CD14-positive monocyte (primary cell): ENCODE measurements at regions of chr10 and their contacts with region 1.

Region 1: GRCh38 chr10:132939957-132940790 is 2.2 kb downstream of the CFAP46 start:
- DNase-seq: peak; percentile 44 to 48 (median 44)
- H3K4me3 ChIP-seq: no peak overlapping the region
- H3K4me3 Mint-ChIP-seq: peak overlapping the region in 1 of 2 donors; percentile 78
- H3K27ac ChIP-seq: no peak overlapping the region
- H3K27ac Mint-ChIP-seq: peak overlapping the region in 1 of 7 donors; percentile 68
- H3K4me1 ChIP-seq: peaks cover 0 to 6% of the 10 kb centered on the region in 2 donors
- H3K4me1 Mint-ChIP-seq: peaks cover 5% of the 10 kb centered on the region
- H3K27me3 ChIP-seq: peaks cover 12 to 49% of the 10 kb centered on the region in 2 donors
- H3K27me3 Mint-ChIP-seq: peaks cover 36 to 65% (median 43%) of the 10 kb centered on the region in 3 donors
- CTCF ChIP-seq: peak; percentile 82

Region 2: DNA sequence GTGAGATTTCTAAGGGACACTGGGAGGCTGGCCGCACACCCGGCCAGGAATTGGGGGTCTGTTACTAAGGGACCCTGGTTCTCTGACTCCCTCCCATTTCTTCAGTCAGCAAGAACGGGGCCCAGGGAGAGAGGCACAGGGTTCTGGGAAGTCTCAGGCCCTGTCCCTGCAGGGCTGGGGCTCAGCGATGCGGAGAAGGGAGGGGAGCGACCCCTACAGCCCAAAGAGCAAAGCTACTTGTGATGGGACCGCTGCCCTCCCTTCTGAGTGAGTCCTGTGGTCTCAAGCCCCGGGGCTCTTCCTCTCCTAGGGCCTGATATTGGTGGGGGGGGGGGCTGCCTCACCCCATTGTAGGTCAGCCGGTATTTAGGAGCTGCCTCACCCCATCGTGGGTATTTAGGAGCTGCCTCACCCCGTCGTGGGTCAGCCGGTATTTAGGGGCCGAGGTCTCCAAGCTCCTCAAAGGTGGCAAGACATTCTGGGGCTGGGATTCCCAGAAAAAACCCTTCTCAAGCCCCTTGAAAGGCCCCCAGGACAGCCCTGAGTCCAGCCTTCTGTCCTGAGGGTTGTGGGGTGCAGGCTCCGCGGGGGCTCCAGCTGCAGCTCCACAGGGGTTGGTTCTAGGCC is 137.4 kb before region 1 on chr10:
- intact Hi-C with region 1: no loop called
- DNase-seq: no peak
- H3K4me3 ChIP-seq: no peak overlapping the region
- H3K4me3 Mint-ChIP-seq: no peak overlapping the region
- H3K27ac ChIP-seq: no peak overlapping the region
- H3K27ac Mint-ChIP-seq: no peak overlapping the region
- H3K4me1 ChIP-seq: no peaks in the 10 kb centered on the region
- H3K4me1 Mint-ChIP-seq: no peaks in the 10 kb centered on the region
- H3K27me3 ChIP-seq: no peaks in the 10 kb centered on the region
- H3K27me3 Mint-ChIP-seq: peaks cover 1 to 5% (median 3%) of the 10 kb centered on the region in 3 donors
- CTCF ChIP-seq: no peak

Region 3: DNA sequence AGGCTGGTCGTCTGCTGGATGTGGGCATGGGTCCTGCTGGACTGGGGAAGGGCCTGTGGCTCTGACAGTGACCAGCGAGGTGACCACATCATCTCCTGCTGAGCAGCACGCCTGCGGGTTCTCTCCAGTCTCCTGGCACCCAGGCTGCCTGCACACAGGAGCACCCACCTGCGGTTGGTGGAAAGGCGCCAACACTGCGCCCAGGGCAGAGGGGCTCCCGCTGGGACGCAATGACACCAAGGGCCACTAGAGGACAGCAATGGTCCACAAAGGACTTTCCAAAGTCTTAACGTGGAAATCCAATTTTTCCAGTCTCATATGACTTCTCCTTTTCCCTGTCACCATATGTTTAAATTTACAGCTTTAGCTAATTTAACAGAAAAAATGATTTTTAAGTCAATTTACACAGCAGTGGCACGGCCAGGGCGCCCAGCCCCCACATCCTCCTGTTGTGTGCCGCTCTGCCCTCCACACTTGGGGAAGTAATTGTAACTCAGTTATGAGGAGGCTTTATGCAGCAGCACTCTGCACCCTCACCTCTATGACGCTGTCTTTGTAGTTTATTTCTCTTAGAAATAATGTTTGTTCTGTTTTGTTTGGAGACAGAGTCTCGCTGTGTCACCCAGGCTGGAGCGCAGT is 35.9 kb before region 1 on chr10:
- intact Hi-C with region 1: no loop called
- DNase-seq: peak; percentile 4 to 23 (median 21)
- H3K4me3 ChIP-seq: no peak overlapping the region
- H3K4me3 Mint-ChIP-seq: peak overlapping the region in 1 of 2 donors; percentile 37
- H3K27ac ChIP-seq: no peak overlapping the region
- H3K27ac Mint-ChIP-seq: peak overlapping the region in 1 of 7 donors; percentile 24
- H3K4me1 ChIP-seq: no peaks in the 10 kb centered on the region
- H3K4me1 Mint-ChIP-seq: peaks cover 2% of the 10 kb centered on the region
- H3K27me3 ChIP-seq: no peaks in the 10 kb centered on the region
- H3K27me3 Mint-ChIP-seq: peaks cover 2 to 17% (median 6%) of the 10 kb centered on the region in 3 donors
- CTCF ChIP-seq: peak; percentile 89

Region 4: DNA sequence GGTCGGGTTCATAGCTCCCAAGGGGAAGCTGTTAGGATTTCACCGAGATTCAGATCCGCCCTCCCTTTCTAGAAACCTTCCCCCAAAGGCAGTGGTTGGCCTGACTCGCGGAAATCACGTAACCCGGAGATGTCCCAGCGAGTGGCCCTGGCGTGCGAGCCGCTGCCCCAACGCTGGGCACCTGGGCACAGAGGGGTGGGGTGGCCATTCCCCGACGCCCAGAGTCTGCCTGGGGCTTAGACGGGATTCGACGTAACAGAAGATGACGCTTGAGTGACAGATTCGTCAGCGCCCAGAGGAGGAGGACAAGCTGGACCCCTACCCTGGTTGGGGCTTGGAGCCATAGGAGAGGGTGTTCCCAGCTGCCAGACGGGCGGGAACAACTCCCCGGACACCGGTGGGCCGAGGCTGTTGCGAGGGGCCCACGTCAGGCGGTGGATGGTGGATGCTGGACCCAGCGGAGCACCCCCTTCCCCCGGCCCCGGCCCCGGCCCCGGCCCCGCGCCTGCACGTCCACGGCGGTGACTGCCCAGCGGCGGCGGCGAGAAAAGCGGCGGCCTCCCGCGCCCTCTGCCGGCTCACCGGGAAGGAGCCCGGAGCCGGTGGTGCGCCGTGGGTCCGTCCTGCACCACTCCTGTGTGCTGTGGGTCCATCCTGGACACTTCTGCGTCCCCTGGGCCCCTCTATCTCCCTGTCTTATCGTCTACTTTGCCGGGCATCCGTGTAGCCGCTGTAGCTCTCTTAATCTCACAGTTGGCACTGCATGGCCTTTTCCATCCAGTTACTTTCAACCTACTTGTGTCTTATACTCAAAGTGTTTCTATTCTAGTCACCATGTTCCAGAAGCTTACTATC is 184.4 kb after region 1 on chr10:
- intact Hi-C with region 1: loop called (anchors 2 kb)
- DNase-seq: peak in 1 of 3 donors; percentile 10
- H3K4me3 ChIP-seq: no peak overlapping the region
- H3K4me3 Mint-ChIP-seq: peak overlapping the region in 1 of 2 donors; percentile 29
- H3K27ac ChIP-seq: no peak overlapping the region
- H3K27ac Mint-ChIP-seq: peak overlapping the region in 1 of 7 donors; percentile 66
- H3K4me1 ChIP-seq: no peaks in the 10 kb centered on the region
- H3K4me1 Mint-ChIP-seq: peaks cover 3% of the 10 kb centered on the region
- H3K27me3 ChIP-seq: peaks cover 0 to 17% of the 10 kb centered on the region in 2 donors
- H3K27me3 Mint-ChIP-seq: peaks cover 11 to 25% (median 11%) of the 10 kb centered on the region in 3 donors
- CTCF ChIP-seq: peak; percentile 63

Region 5: DNA sequence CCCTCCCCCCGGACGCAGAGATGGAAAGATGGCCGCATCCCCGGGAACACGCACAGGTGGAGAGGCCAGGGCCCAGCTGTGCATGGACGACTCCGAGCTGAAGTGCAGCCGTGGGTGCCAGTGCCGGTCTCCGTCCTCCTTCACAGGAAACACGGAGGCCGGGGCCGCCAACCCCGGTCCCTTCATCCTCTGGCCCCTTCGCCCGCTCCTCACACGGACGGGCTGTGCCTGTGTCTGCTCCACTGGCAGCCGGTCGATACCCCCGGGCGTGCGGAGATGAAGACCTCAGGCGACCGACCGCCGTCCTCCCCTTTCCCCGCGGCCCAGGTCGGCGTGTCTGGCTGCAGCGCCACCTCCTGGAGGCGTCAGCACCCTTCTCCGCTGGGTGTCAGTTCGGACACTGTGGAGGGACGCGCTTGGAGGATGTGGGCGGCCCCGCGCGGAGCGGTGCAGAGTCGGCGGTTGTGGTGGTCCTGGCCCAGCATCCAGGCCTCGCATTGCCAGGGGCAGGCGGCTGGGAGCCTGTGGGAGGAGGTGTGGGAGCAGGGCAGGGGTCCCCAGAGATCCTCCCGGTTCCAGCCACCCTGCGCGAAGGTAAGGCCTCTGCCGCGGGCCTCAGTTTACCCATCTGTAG is 378.4 kb after region 1 on chr10:
- intact Hi-C with region 1: loop called in 1 of 2 experiments (anchors 5 kb)
- DNase-seq: peak; percentile 61 to 70 (median 68)
- H3K4me3 ChIP-seq: peak overlapping the region in 2 of 3 experiments; percentile 10 to 56
- H3K4me3 Mint-ChIP-seq: peak overlapping the region; percentile 71 to 83
- H3K27ac ChIP-seq: no peak overlapping the region
- H3K27ac Mint-ChIP-seq: peak overlapping the region in 1 of 7 donors; percentile 63
- H3K4me1 ChIP-seq: peaks cover 6 to 7% of the 10 kb centered on the region in 2 donors
- H3K4me1 Mint-ChIP-seq: peaks cover 9% of the 10 kb centered on the region
- H3K27me3 ChIP-seq: peaks cover 0 to 13% of the 10 kb centered on the region in 2 donors
- H3K27me3 Mint-ChIP-seq: peaks cover 20 to 33% (median 28%) of the 10 kb centered on the region in 3 donors
- CTCF ChIP-seq: peak; percentile 94